IMR-90 (cell line): ENCODE measurements at regions of chr3 and their contacts with region 1.

Region 1: GRCh38 chr3:38354588-38355330 is 8.2 kb downstream of the XYLB start:
- DNase-seq: peak; percentile 68
- ATAC-seq: no peak
- H3K4me3 ChIP-seq: no peak overlapping the region
- H3K27ac ChIP-seq: no peak overlapping the region
- H3K4me1 ChIP-seq: no peaks in the 10 kb centered on the region
- H3K27me3 ChIP-seq: no peaks in the 10 kb centered on the region
- CTCF ChIP-seq: no peak
- POLR2A ChIP-seq: no peak
- RAD21 ChIP-seq: no peak

Region 2: GRCh38 chr3:38383156-38383875 is 28.6 kb after region 1 on chr3:
- CTCF ChIA-PET with region 1: no interaction called
- POLR2A ChIA-PET with region 1: no interaction called
- dilution Hi-C with region 1: no loop called
- in situ Hi-C with region 1: no loop called
- intact Hi-C with region 1: no loop called
- DNase-seq: no peak
- ATAC-seq: no peak
- H3K4me3 ChIP-seq: no peak overlapping the region
- H3K27ac ChIP-seq: no peak overlapping the region
- H3K4me1 ChIP-seq: no peaks in the 10 kb centered on the region; the same call in 1 of the 2 replicates
- H3K27me3 ChIP-seq: no peaks in the 10 kb centered on the region
- CTCF ChIP-seq: no peak
- POLR2A ChIP-seq: no peak
- RAD21 ChIP-seq: no peak

Region 3: GRCh38 chr3:38496131-38496910 is 141.6 kb after region 1 on chr3 and contains the start of gene EXOG:
- CTCF ChIA-PET with region 1: no interaction called
- POLR2A ChIA-PET with region 1: no interaction called
- dilution Hi-C with region 1: loop called (anchors 25 kb)
- in situ Hi-C with region 1: no loop called
- intact Hi-C with region 1: no loop called
- DNase-seq: peak; percentile 89
- ATAC-seq: peak; percentile 85
- H3K4me3 ChIP-seq: peak within 1 kb of the TSS; percentile 91
- H3K27ac ChIP-seq: peak within 1 kb of the TSS; percentile 91
- H3K4me1 ChIP-seq: peaks cover 11% of the 10 kb centered on the region
- H3K27me3 ChIP-seq: no peaks in the 10 kb centered on the region
- CTCF ChIP-seq: peak; percentile 84
- POLR2A ChIP-seq: 0 out of 2 replicates have a peak, but pooled peaks have one; percentile 20
- RAD21 ChIP-seq: peak; percentile 68
- total RNA-seq, gene EXOG: 10.2 and 12.8 TPM in 2 replicates